ENCODE measurements at regions of chr19 and their contacts with region 1.

Region 1: GRCh38 chr19:39406656-39407393 is at the start of gene ZFP36:
- DNase-seq: peak in 1 of 2 experiments; percentile 86
- H3K4me3 ChIP-seq: peak within 1 kb of the TSS; percentile 63 to 91 (median 84)
- H3K27ac ChIP-seq: peak within 1 kb of the TSS; percentile 56; the same call in 1 of the 2 replicates
- H3K4me1 ChIP-seq: peaks cover 10 to 48% (median 27%) of the 10 kb centered on the region in 4 experiments
- H3K27me3 ChIP-seq: no peaks in the 10 kb centered on the region
- CTCF ChIP-seq: no peak
- EP300 ChIP-seq: no peak
- POLR2A ChIP-seq: peak; percentile 74 to 93
- RAD21 ChIP-seq: no peak; a peak in 1 of 4 replicates
- total RNA-seq, gene ZFP36: 10.9 and 12.2 TPM in 2 replicates

Region 2: GRCh38 chr19:39423258-39424086 is 16.6 kb after region 1 on chr19:
- CTCF ChIA-PET with region 1: interaction called, 15 read pairs
- POLR2A ChIA-PET with region 1: interaction called, 1,154 read pairs
- DNase-seq: no peak
- H3K4me3 ChIP-seq: no peak overlapping the region
- H3K27ac ChIP-seq: no peak overlapping the region
- H3K4me1 ChIP-seq: peaks cover 2 to 9% (median 7%) of the 10 kb centered on the region in 4 experiments; a peak in 5 of 7 replicates
- H3K27me3 ChIP-seq: no peaks in the 10 kb centered on the region
- CTCF ChIP-seq: no peak
- EP300 ChIP-seq: no peak
- POLR2A ChIP-seq: no peak; a peak in 1 of 3 replicates
- RAD21 ChIP-seq: no peak